ENCODE measurements at regions of chr4 and their contacts with region 1.

Region 1: GRCh38 chr4:154506253-154506652 is 14.7 kb upstream of the DCHS2 start:
- DNase-seq: no peak
- ATAC-seq: no peak

Region 2: DNA sequence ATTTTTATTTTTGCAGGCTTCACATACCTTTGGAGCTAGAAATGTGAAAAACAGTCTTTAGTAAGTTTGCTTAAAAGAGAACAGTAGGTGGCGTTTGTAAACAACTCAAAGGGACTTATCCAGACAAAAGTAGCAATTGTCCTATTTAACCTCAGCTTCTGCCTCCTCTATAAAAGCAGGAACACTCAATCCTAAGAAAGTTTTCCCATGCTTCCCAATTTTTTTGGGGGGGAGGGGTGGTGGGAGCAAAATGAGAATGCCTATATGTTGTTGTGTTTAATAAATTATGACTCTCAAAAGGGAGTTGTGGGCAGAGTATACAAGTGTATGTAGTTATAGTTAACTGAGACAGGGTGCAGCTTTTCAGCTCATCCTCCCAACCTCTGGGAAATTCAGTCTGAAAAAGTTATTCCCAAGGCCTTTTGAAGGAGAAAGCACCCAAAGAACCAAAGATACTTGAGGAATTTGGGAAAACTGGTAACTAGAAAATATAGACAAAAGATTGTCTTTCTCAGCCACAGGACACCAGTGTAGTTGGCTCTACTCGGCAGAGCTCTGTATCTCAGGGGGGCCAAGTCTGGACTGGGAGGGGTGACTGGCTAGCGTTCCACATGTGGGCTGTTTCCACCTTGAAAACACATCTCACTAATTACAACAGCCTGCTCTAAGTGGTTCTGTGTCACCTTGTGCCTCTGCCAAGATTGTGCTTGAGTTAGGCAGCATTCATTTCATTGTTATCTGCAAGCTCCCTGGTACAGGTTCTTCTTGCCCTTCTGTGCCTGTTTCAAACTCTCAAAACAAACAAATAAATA is 720.1 kb before region 1 on chr4:
- intact Hi-C with region 1: loop called in 1 of 2 experiments (anchors 5 kb)
- DNase-seq: no peak
- ATAC-seq: no peak

Region 3: DNA sequence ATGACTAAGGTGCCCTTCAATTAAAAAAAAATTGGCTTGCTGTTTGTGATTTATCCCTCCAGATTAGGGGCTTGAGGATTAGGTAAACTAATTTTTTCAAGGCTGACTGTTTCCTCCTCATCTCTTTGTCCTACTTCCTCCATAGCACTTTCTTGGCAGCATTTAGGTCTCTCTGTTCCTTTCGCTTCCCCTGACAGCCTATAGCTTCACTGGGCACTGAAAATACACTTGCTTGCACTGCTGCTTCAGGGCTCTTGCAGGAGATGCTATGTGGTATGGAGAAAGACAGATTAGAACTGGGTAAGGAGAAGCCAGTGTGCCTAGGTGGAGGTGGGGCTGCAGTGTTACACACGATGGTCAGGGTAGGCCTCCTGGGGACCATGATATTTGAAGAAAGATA is 605.0 kb before region 1 on chr4:
- intact Hi-C with region 1: no loop called
- DNase-seq: no peak
- ATAC-seq: no peak

Region 4: DNA sequence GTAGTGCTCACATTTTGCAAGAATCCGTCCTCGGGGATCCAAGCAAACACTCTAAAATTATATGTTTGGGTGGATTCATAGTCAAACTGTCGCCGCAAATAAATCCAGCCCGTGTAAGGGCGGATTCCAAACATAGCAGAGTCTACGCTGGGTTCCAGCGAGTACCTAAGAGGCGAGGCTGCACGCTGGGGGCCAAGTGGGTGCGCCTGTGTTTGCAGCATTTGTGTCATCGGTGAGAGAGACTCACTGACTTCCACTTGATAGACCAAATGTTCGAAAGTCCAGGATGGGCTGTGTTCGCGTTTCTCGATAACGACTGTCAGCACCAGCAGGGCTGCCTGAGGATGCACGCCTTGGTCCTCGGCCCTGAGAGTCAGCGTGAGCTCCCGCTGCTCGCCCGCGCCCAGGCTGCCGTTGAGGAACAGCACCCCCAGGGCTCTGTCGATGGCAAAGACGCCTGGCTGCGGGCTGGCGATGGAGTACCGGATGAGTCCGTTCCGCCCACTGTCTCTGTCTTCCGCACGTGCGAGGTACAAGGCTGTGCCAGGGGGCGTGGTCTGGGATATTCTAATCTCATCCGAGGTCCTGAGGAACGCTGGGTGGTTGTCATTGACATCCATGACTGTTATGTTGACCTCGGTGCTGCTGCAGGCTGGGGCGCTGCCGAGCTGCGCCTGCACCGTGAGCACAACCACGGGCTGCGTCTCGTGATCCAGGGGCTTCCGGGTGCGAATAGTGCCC is 173.4 kb before region 1 on chr4:
- intact Hi-C with region 1: loop called in 1 of 2 experiments (anchors 10 kb)
- DNase-seq: peak; percentile 37
- ATAC-seq: peak in 1 of 2 donors; percentile 67

Region 5: GRCh38 chr4:154399259-154399974 is 106.8 kb before region 1 on chr4:
- intact Hi-C with region 1: loop called in 1 of 2 experiments (anchors 2 kb)
- DNase-seq: no peak
- ATAC-seq: no peak

Measured in left cardiac atrium (tissue), 4 donors.